ENCODE measurements at regions of chrX and their contacts with region 1.

Region 1: GRCh38 chrX:79182616-79183015 is 38.1 kb downstream of the GPR174 start:
- DNase-seq: no peak
- H3K4me3 ChIP-seq: no peak overlapping the region
- H3K4me3 Mint-ChIP-seq: peak overlapping the region in 7 of 8 donors; percentile 18 to 85 (median 50)
- H3K27ac ChIP-seq: peak overlapping the region; percentile 43
- H3K27ac Mint-ChIP-seq: peak overlapping the region; percentile 71 to 92 (median 86)
- H3K4me1 ChIP-seq: peaks cover 83% of the 10 kb centered on the region
- H3K4me1 Mint-ChIP-seq: peaks cover 28 to 72% (median 47%) of the 10 kb centered on the region in 4 donors
- H3K27me3 ChIP-seq: no peaks in the 10 kb centered on the region
- H3K27me3 Mint-ChIP-seq: no peaks in the 10 kb centered on the region

Region 2: DNA sequence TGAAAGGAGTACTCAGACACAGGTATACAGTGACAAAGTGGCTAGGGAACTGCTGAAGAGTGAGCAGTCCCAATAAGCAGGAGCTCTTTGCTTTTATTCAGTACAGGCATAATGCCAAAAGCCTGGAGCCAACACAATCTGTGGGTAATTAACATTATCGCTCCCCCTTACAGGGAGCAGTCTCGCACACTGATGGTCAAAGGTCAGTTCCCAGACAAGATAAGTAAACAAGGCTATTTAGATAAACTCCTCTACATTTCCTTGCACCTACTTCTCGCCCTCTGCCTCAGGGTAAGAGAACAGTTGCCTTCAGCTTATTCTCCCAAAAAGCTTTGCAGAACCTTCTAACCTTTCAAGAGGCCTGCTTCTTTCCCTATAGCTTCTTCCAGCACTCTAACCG is 969.3 kb before region 1 on chrX:
- CTCF ChIA-PET with region 1: no interaction called
- POLR2A ChIA-PET with region 1: no interaction called
- intact Hi-C with region 1: no loop called
- DNase-seq: no peak
- H3K4me3 ChIP-seq: no peak overlapping the region
- H3K4me3 Mint-ChIP-seq: no peak overlapping the region
- H3K27ac ChIP-seq: no peak overlapping the region
- H3K27ac Mint-ChIP-seq: no peak overlapping the region
- H3K4me1 ChIP-seq: no peaks in the 10 kb centered on the region
- H3K4me1 Mint-ChIP-seq: no peaks in the 10 kb centered on the region
- H3K27me3 ChIP-seq: no peaks in the 10 kb centered on the region
- H3K27me3 Mint-ChIP-seq: no peaks in the 10 kb centered on the region

Region 3: DNA sequence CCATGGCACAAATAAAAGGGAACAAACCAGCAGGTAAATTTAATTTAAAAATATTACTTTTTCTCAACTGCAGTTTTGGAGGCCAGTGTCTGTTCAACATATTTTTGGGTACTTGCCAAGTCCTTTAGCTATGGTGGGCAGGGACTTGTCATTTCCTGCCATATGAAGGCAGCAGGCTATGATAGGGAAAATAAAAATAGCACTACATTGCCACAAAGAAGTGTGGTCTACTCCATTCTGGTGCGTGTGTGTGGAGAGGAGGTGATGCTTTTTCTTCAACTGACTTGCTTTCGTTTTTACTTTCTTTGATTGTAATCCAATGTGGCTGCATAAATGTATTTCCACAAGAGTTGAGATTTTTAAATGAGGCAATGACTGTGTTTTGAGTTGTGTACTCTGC is 21.0 kb before region 1 on chrX:
- CTCF ChIA-PET with region 1: interaction called, 3 read pairs
- POLR2A ChIA-PET with region 1: interaction called, 137 read pairs
- intact Hi-C with region 1: no loop called
- DNase-seq: peak; percentile 73 to 85 (median 79)
- H3K4me3 ChIP-seq: peak overlapping the region; percentile 45 to 55
- H3K4me3 Mint-ChIP-seq: peak overlapping the region; percentile 75 to 97 (median 94)
- H3K27ac ChIP-seq: peak overlapping the region; percentile 51
- H3K27ac Mint-ChIP-seq: peak overlapping the region; percentile 87 to 98 (median 95)
- H3K4me1 ChIP-seq: peaks cover 90% of the 10 kb centered on the region
- H3K4me1 Mint-ChIP-seq: peaks cover 37 to 85% (median 53%) of the 10 kb centered on the region in 4 donors
- H3K27me3 ChIP-seq: no peaks in the 10 kb centered on the region
- H3K27me3 Mint-ChIP-seq: no peaks in the 10 kb centered on the region

Region 4: GRCh38 chrX:79167462-79167861 is 15.2 kb before region 1 on chrX:
- CTCF ChIA-PET with region 1: interaction called, 4 read pairs
- POLR2A ChIA-PET with region 1: interaction called, 137 read pairs
- intact Hi-C with region 1: no loop called
- DNase-seq: no peak
- H3K4me3 ChIP-seq: peak overlapping the region in 1 of 2 donors; percentile 23
- H3K4me3 Mint-ChIP-seq: peak overlapping the region; percentile 19 to 81 (median 60)
- H3K27ac ChIP-seq: peak overlapping the region; percentile 66
- H3K27ac Mint-ChIP-seq: peak overlapping the region; percentile 77 to 97 (median 90)
- H3K4me1 ChIP-seq: peaks cover 98% of the 10 kb centered on the region
- H3K4me1 Mint-ChIP-seq: peaks cover 47 to 95% (median 67%) of the 10 kb centered on the region in 4 donors
- H3K27me3 ChIP-seq: no peaks in the 10 kb centered on the region
- H3K27me3 Mint-ChIP-seq: no peaks in the 10 kb centered on the region

Region 5: GRCh38 chrX:79259073-79259689 is 76.6 kb after region 1 on chrX:
- CTCF ChIA-PET with region 1: no interaction called
- POLR2A ChIA-PET with region 1: interaction called, 5 read pairs
- intact Hi-C with region 1: loop called (anchors 5 kb)
- DNase-seq: peak; percentile 71 to 82 (median 77)
- H3K4me3 ChIP-seq: no peak overlapping the region
- H3K4me3 Mint-ChIP-seq: peak overlapping the region; percentile 46 to 87 (median 66)
- H3K27ac ChIP-seq: peak overlapping the region; percentile 58
- H3K27ac Mint-ChIP-seq: peak overlapping the region; percentile 86 to 96 (median 94)
- H3K4me1 ChIP-seq: peaks cover 89% of the 10 kb centered on the region
- H3K4me1 Mint-ChIP-seq: peaks cover 51 to 86% (median 68%) of the 10 kb centered on the region in 4 donors
- H3K27me3 ChIP-seq: no peaks in the 10 kb centered on the region
- H3K27me3 Mint-ChIP-seq: no peaks in the 10 kb centered on the region

Measured in CD4-positive, alpha-beta memory T cell (primary cell).